ENCODE measurements at regions of chr7 and their contacts with region 1.

Region 1: DNA sequence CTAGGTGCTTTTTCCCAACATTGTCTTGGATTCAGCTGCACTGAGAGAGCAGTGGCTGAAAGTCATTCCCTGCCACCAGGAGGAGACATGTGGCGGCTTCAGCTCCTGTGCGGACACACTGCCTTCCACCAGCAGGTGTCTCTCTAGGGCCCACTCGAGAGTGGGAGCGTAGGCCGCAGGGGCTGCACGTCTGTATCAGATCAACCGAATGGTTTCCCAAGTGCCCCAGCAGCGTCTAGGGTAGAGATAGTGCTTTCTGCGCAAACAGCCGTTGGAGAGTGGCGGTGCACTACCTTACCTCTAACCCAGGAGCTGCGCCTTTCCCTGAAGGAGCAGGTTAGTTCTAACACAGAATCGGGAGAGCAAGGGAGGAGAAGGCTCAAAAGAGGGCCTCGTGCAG is 31.7 kb downstream of the PAPOLB start:
- DNase-seq: peak; percentile 41
- ATAC-seq: peak; percentile 98
- H3K4me3 ChIP-seq: no peak overlapping the region
- H3K27ac ChIP-seq: no peak overlapping the region
- H3K4me1 ChIP-seq: no peaks in the 10 kb centered on the region
- H3K27me3 ChIP-seq: no peaks in the 10 kb centered on the region
- CTCF ChIP-seq: peak; percentile 93 to 99 (median 97)
- POLR2A ChIP-seq: no peak
- RAD21 ChIP-seq: peak; percentile 78

Region 2: DNA sequence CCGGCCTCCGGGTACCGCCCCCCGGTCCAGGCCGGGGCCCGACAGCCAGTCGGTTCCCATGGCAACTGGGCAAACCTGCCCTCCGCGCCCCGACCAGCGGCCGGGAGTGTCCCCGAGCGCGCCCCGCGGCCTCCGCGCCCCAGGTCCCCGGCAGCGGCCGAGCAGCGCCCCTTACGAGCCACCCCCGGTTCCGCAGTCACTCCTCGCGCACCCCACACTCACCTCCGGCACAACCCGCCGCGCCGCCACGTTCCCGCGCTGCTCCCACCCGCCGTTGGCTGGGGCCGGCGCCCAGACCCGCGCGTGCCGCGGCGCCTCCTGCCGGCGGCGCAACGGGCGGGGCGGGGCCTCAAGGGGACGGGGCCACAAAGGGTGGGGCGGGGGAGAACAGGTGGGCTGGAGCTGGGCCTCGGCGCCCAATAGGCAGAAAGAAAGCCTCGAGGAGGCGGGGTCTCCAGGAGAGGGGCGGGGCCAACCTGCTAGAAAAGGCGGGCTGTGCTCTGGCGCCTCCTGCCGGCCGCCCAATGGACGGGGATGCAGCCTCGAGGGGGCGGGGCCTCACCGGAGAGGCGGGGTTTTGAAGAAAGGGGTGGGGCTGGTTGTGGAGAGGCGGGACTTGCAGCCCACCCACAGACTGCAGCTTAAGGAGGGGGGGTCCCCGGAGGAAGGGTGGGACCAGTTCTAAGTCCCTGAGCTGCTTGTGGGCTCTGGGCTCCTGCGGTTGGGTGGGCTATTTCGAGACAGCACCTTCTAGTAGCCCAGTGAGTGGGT is 53.4 kb after region 1 on chr7 and contains the start of gene RADIL:
- CTCF ChIA-PET with region 1: interaction called, 8 read pairs
- POLR2A ChIA-PET with region 1: no interaction called
- RAD21 ChIA-PET with region 1: interaction called, 3 read pairs
- intact Hi-C with region 1: loop called (anchors 1 kb)
- DNase-seq: peak; percentile 87
- ATAC-seq: peak; percentile 97
- H3K4me3 ChIP-seq: peak within 1 kb of the TSS; percentile 45 to 71
- H3K27ac ChIP-seq: peak within 1 kb of the TSS; percentile 63; the same call in 1 of the 2 replicates
- H3K4me1 ChIP-seq: peaks cover 0 to 8% of the 10 kb centered on the region in 2 experiments; a peak in 2 of 4 replicates
- H3K27me3 ChIP-seq: no peaks in the 10 kb centered on the region
- CTCF ChIP-seq: peak; percentile 80 to 93 (median 86)
- POLR2A ChIP-seq: no peak
- RAD21 ChIP-seq: peak; percentile 66
- total RNA-seq, gene RADIL: 5.3 TPM

Region 3: GRCh38 chr7:5088906-5089305 is 258.7 kb after region 1 on chr7:
- CTCF ChIA-PET with region 1: interaction called, 14 read pairs
- POLR2A ChIA-PET with region 1: no interaction called
- RAD21 ChIA-PET with region 1: interaction called, 3 to 5 read pairs
- intact Hi-C with region 1: loop called (anchors 1 kb)
- DNase-seq: no peak
- ATAC-seq: peak; percentile 10
- H3K4me3 ChIP-seq: peak overlapping the region in 1 of 2 experiments; percentile 14; a peak in 1 of 4 replicates
- H3K27ac ChIP-seq: peak overlapping the region; percentile 42
- H3K4me1 ChIP-seq: peaks cover 4 to 13% of the 10 kb centered on the region in 2 experiments
- H3K27me3 ChIP-seq: no peaks in the 10 kb centered on the region
- CTCF ChIP-seq: no peak
- POLR2A ChIP-seq: no peak
- RAD21 ChIP-seq: no peak

Measured in HCT116 (cell line).